Panc1 (cell line): ENCODE measurements at regions of chr3 and their contacts with region 1.

Region 1: GRCh38 chr3:55091381-55092225 is 163.7 kb upstream of the LRTM1 start:
- DNase-seq: no peak
- ATAC-seq: no peak
- H3K4me3 ChIP-seq: no peak overlapping the region
- H3K27ac ChIP-seq: no peak overlapping the region
- H3K4me1 ChIP-seq: no peaks in the 10 kb centered on the region
- H3K27me3 ChIP-seq: no peaks in the 10 kb centered on the region
- CTCF ChIP-seq: no peak

Region 2: GRCh38 chr3:54931182-54931581 is 160.4 kb before region 1 on chr3:
- CTCF ChIA-PET with region 1: no interaction called
- POLR2A ChIA-PET with region 1: interaction called, 16 read pairs
- in situ Hi-C with region 1: no loop called
- intact Hi-C with region 1: no loop called
- DNase-seq: no peak
- ATAC-seq: no peak
- H3K4me3 ChIP-seq: no peak overlapping the region
- H3K27ac ChIP-seq: no peak overlapping the region
- H3K4me1 ChIP-seq: no peaks in the 10 kb centered on the region
- H3K27me3 ChIP-seq: no peaks in the 10 kb centered on the region
- CTCF ChIP-seq: no peak

Region 3: GRCh38 chr3:55313666-55314065 is 222.1 kb after region 1 on chr3:
- CTCF ChIA-PET with region 1: no interaction called
- POLR2A ChIA-PET with region 1: no interaction called
- in situ Hi-C with region 1: no loop called
- intact Hi-C with region 1: no loop called
- DNase-seq: no peak
- ATAC-seq: no peak
- H3K4me3 ChIP-seq: no peak overlapping the region
- H3K27ac ChIP-seq: no peak overlapping the region
- H3K4me1 ChIP-seq: no peaks in the 10 kb centered on the region
- H3K27me3 ChIP-seq: no peaks in the 10 kb centered on the region
- CTCF ChIP-seq: no peak